Caco-2 (cell line): ENCODE measurements at regions of chr20 and their contacts with region 1.

Region 1: DNA sequence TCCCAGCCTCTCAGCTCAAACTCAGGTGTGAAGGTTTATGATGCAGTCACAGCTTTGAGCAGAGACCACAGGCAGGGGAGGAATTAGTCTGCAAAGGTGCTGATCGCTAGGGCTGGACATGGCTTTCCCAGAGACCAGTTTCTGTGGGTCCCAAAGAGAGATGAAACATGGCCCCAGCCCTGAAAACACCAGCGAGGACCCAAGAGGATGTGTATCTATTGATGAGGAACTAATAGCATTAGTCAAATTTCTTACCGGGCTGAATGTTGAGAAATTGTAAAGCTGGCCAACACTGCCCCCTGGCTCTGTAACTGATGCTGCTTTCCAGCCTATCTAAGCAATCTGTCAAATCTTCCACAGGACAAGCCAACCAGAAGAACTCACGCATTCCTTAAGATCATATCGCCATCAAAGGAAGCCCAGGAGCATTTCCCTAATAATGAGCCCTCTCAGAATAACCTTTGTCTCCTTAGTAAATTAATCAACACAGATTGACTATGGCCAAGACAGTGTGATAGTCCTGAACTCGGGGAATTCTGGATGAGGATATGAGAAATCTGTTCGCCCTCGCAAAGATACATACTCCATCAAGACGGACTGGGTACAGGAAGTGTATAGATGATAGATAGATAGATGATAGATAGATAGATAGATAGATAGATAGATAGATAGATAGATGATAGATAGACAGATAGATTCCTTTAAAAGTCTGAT is 7.8 kb upstream of the ACSS1 start:
- DNase-seq: peak; percentile 73 to 77
- H3K4me3 ChIP-seq: no peak overlapping the region
- H3K4me3 Mint-ChIP-seq: peak overlapping the region; percentile 68
- H3K27ac Mint-ChIP-seq: peak overlapping the region; percentile 56
- H3K4me1 ChIP-seq: peaks cover 34% of the 10 kb centered on the region
- H3K4me1 Mint-ChIP-seq: peaks cover 40% of the 10 kb centered on the region
- H3K27me3 ChIP-seq: no peaks in the 10 kb centered on the region
- H3K27me3 Mint-ChIP-seq: no peaks in the 10 kb centered on the region
- CTCF ChIP-seq: peak; percentile 80 to 91

Region 2: DNA sequence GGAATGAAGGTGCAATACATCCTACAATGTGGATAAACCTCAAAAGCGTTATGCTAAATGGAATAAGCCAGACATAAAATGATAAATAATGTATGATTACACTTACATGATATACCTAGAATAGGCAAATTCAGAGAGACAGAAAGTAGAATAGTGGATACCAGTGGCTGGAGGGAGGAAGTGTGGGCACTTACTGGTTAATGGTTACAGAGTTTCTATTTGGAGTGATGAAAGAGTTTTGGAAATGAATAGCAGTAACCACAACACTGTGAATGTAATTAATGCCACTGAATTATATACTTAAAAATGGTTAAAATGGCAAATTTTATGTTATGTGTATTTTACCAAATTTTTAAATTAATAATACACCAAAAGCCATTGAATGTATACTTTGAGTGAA is 188.1 kb before region 1 on chr20:
- CTCF ChIA-PET with region 1: no interaction called
- POLR2A ChIA-PET with region 1: no interaction called
- intact Hi-C with region 1: no loop called
- DNase-seq: no peak
- H3K4me3 ChIP-seq: no peak overlapping the region
- H3K4me3 Mint-ChIP-seq: no peak overlapping the region
- H3K27ac Mint-ChIP-seq: no peak overlapping the region
- H3K4me1 ChIP-seq: no peaks in the 10 kb centered on the region
- H3K4me1 Mint-ChIP-seq: no peaks in the 10 kb centered on the region
- H3K27me3 ChIP-seq: no peaks in the 10 kb centered on the region; the same call in 1 of the 2 replicates
- H3K27me3 Mint-ChIP-seq: peaks cover 12% of the 10 kb centered on the region
- CTCF ChIP-seq: no peak

Region 3: DNA sequence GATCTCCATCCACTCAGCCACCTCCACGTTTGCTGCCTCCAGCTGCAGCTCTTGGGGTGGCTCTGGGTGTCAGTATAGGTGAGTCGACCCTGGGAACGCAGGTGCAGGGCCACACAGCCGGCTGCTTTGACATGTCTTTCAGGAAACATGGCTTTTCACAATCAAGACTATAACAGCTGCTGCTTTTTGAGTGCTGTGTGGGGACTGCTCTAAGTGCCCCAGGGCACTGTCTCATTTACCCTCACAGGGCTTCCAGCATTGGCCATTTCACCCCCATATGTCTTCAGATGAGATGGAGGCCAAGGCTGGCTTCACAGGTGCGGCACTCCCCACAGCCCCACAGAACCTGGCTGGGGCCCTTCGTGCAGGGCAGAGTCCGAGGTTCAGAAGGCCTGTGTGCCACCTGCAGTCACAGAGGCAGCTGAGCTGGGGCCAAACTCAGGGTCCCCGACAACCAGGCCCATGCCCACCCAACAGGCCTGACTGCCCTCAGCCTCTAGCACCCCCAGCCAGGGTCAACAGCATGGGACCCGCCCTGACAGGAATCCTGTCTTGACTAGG is 131.6 kb before region 1 on chr20:
- CTCF ChIA-PET with region 1: interaction called, 8 read pairs
- POLR2A ChIA-PET with region 1: no interaction called
- intact Hi-C with region 1: loop called (anchors 2 kb)
- DNase-seq: no peak
- H3K4me3 ChIP-seq: no peak overlapping the region
- H3K4me3 Mint-ChIP-seq: no peak overlapping the region
- H3K27ac Mint-ChIP-seq: no peak overlapping the region
- H3K4me1 ChIP-seq: peaks cover 14% of the 10 kb centered on the region
- H3K4me1 Mint-ChIP-seq: peaks cover 21% of the 10 kb centered on the region
- H3K27me3 ChIP-seq: no peaks in the 10 kb centered on the region
- H3K27me3 Mint-ChIP-seq: no peaks in the 10 kb centered on the region
- CTCF ChIP-seq: no peak

Region 4: GRCh38 chr20:24992487-24993205 is 73.1 kb before region 1 on chr20 and contains the start of gene APMAP:
- CTCF ChIA-PET with region 1: interaction called, 44 read pairs
- POLR2A ChIA-PET with region 1: interaction called, 3 read pairs
- intact Hi-C with region 1: loop called (anchors 1 kb)
- DNase-seq: peak; percentile 92 to 96
- H3K4me3 ChIP-seq: peak within 1 kb of the TSS; percentile 78
- H3K4me3 Mint-ChIP-seq: peak within 1 kb of the TSS; percentile 93
- H3K27ac Mint-ChIP-seq: peak within 1 kb of the TSS; percentile 95
- H3K4me1 ChIP-seq: peaks cover 34% of the 10 kb centered on the region
- H3K4me1 Mint-ChIP-seq: peaks cover 35% of the 10 kb centered on the region
- H3K27me3 ChIP-seq: no peaks in the 10 kb centered on the region
- H3K27me3 Mint-ChIP-seq: no peaks in the 10 kb centered on the region
- CTCF ChIP-seq: no peak
- total RNA-seq, gene APMAP: 119 and 138 TPM in 2 replicates

Region 5: DNA sequence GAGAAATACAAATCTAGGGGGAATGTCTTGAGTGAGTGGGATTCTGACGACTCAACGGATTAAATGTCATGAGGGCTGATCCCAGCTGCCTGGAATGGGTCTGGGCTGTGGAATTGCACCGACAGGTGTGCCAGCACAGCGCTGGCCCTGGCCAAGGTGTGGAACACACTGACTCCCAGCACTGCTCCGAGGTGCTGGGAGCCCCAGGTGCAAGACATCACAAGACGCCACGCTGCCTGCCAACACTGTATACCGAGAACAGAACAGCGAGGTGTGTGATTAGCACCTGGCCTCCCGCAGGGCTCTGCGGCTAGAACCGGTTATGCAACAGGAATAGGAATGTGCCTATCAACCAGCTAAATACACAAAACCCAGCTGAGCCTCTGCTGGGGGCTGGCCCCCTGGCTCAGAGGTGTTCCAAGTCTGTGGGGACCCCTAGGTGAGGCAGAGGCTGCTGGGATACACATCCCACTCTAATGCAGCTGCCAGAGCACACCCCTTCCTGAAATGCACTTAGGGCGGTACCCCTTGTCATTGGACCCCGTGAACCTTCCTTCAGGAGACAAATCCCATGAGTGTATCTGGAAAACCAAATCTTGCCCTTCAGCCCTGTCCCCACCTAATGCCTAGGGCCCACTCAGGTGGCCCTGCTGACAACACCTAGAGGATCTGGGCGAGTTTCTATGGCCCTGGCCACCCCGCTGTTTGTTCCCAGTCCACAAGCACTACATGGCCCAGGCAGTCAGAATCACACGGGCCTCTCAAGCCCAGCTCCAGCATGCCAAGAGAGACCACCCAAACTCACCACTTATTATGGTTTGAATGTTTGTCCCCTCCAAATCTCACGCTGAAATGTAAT is 48.3 kb before region 1 on chr20:
- CTCF ChIA-PET with region 1: interaction called, 9 read pairs
- POLR2A ChIA-PET with region 1: no interaction called
- intact Hi-C with region 1: loop called (anchors 2 kb)
- DNase-seq: peak; percentile 87 to 91
- H3K4me3 ChIP-seq: no peak overlapping the region
- H3K4me3 Mint-ChIP-seq: peak overlapping the region; percentile 63
- H3K27ac Mint-ChIP-seq: peak overlapping the region; percentile 92
- H3K4me1 ChIP-seq: peaks cover 30% of the 10 kb centered on the region
- H3K4me1 Mint-ChIP-seq: peaks cover 28% of the 10 kb centered on the region
- H3K27me3 ChIP-seq: no peaks in the 10 kb centered on the region
- H3K27me3 Mint-ChIP-seq: no peaks in the 10 kb centered on the region
- CTCF ChIP-seq: peak in 1 of 2 experiments; percentile 0

Region 6: DNA sequence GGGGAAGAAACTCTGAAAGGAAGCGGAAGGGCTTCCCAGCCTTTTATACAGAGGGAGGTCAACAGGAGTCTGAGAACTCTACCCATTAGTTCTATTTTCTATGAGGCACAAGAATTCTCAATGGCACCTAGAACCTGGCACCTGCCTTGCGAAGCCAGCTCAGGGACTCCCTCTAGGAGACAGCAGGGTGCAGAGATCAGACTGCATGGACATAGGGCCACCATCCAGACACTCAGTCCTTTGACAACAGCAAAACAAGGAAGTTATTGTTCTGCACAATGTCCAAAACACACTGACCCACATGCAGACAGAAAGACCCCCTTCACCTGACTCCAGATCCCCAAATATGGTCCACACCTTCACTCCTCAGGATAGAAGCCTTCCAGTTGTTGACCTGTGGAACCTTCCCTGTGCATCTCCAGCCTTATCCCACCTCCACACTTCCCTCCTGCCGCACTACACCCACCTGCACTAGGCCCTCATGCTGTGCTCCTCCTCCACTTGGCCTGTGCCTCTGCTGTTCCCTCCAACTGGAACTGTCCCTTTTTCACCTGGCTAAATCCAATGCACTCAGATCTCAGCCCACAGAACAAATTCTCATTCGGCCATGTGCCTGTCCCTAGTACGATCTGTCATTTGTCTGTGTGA is 35.7 kb before region 1 on chr20:
- CTCF ChIA-PET with region 1: interaction called, 9 read pairs
- POLR2A ChIA-PET with region 1: interaction called, 3 read pairs
- intact Hi-C with region 1: loop called (anchors 2 kb)
- DNase-seq: no peak
- H3K4me3 ChIP-seq: no peak overlapping the region
- H3K4me3 Mint-ChIP-seq: no peak overlapping the region
- H3K27ac Mint-ChIP-seq: peak overlapping the region; percentile 38
- H3K4me1 ChIP-seq: peaks cover 24% of the 10 kb centered on the region
- H3K4me1 Mint-ChIP-seq: peaks cover 5% of the 10 kb centered on the region
- H3K27me3 ChIP-seq: no peaks in the 10 kb centered on the region
- H3K27me3 Mint-ChIP-seq: no peaks in the 10 kb centered on the region
- CTCF ChIP-seq: no peak

Region 7: DNA sequence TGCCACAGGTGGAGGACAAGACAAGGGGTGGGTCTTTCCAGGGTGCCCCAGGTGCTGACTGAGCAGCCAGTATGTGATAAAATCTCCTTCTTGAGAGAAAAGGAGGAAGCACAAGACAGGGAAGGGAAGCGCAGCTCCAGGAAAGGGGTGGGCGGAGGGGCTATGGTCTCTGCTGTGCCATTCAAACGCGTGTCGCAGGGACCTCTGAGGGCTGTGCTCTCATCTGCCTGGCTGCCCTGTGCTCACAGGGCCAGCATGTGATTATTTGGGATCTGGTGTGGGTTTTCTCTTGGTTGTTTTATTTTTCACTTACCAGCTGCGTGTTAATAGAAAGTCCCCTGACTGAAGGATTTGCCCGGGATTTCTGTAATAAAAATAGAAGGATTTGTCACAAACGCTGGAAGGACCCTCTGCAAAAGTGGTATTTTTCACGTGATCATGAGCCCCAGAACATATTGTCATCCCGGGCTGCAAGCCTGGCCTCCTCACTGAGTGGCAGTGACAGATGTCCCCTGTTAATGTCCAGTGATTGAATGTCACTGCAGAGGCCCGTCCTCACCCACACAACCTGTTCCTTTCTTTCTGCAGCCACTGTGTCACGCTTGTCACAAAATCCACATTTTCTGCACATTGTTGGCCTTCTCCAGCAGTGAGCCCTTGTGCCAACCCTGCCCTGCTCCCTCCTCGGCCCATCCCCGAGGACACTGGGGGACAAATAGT is 51.1 kb after region 1 on chr20:
- CTCF ChIA-PET with region 1: no interaction called
- POLR2A ChIA-PET with region 1: no interaction called
- intact Hi-C with region 1: no loop called
- DNase-seq: no peak
- H3K4me3 ChIP-seq: no peak overlapping the region
- H3K4me3 Mint-ChIP-seq: no peak overlapping the region
- H3K27ac Mint-ChIP-seq: no peak overlapping the region
- H3K4me1 ChIP-seq: peaks cover 15% of the 10 kb centered on the region
- H3K4me1 Mint-ChIP-seq: peaks cover 3% of the 10 kb centered on the region
- H3K27me3 ChIP-seq: no peaks in the 10 kb centered on the region
- H3K27me3 Mint-ChIP-seq: peaks cover 5% of the 10 kb centered on the region
- CTCF ChIP-seq: no peak

Region 8: GRCh38 chr20:25178563-25179438 is 113.0 kb after region 1 on chr20:
- CTCF ChIA-PET with region 1: interaction called, 4 read pairs
- POLR2A ChIA-PET with region 1: no interaction called
- intact Hi-C with region 1: loop called (anchors 2 kb)
- DNase-seq: peak; percentile 55 to 69
- H3K4me3 ChIP-seq: no peak overlapping the region
- H3K4me3 Mint-ChIP-seq: no peak overlapping the region
- H3K27ac Mint-ChIP-seq: no peak overlapping the region
- H3K4me1 ChIP-seq: peaks cover 2% of the 10 kb centered on the region; the same call in 1 of the 2 replicates
- H3K4me1 Mint-ChIP-seq: no peaks in the 10 kb centered on the region
- H3K27me3 ChIP-seq: no peaks in the 10 kb centered on the region
- H3K27me3 Mint-ChIP-seq: no peaks in the 10 kb centered on the region
- CTCF ChIP-seq: peak; percentile 84 to 85